ENCODE measurements at regions of chr16 and their contacts with region 1.

Region 1: GRCh38 chr16:19907161-19907992 is 22.7 kb upstream of the GPRC5B start:
- DNase-seq: peak; percentile 64
- ATAC-seq: peak; percentile 100
- H3K4me3 ChIP-seq: no peak overlapping the region
- H3K27ac ChIP-seq: no peak overlapping the region
- H3K4me1 ChIP-seq: no peaks in the 10 kb centered on the region
- H3K27me3 ChIP-seq: peaks cover 2% of the 10 kb centered on the region; the same call in 1 of the 2 replicates
- CTCF ChIP-seq: peak; percentile 95
- POLR2A ChIP-seq: no peak
- RAD21 ChIP-seq: peak; percentile 93

Region 2: GRCh38 chr16:20300312-20301097 is 393.1 kb after region 1 on chr16:
- CTCF ChIA-PET with region 1: interaction called, 36 read pairs
- POLR2A ChIA-PET with region 1: no interaction called
- dilution Hi-C with region 1: no loop called
- in situ Hi-C with region 1: loop called (anchors 10 kb)
- intact Hi-C with region 1: loop called (anchors 1 kb)
- DNase-seq: peak; percentile 41
- ATAC-seq: peak; percentile 79
- H3K4me3 ChIP-seq: no peak overlapping the region
- H3K27ac ChIP-seq: no peak overlapping the region
- H3K4me1 ChIP-seq: no peaks in the 10 kb centered on the region
- H3K27me3 ChIP-seq: no peaks in the 10 kb centered on the region
- CTCF ChIP-seq: peak; percentile 67
- POLR2A ChIP-seq: no peak
- RAD21 ChIP-seq: peak; percentile 71

Measured in IMR-90 (cell line).